Mucosa of descending colon (tissue), 3 donors: ENCODE measurements at regions of chr9 and their contacts with region 1.

Region 1: GRCh38 chr9:129656795-129657390 is 8.6 kb upstream of the PRRX2 start:
- DNase-seq: no peak
- ATAC-seq: peak; percentile 74
- H3K4me3 ChIP-seq: no peak overlapping the region
- H3K4me1 ChIP-seq: no peaks in the 10 kb centered on the region
- CTCF ChIP-seq: no peak

Region 2: GRCh38 chr9:129796029-129796910 is 139.4 kb after region 1 on chr9:
- intact Hi-C with region 1: loop called in 1 of 2 experiments (anchors 10 kb)
- DNase-seq: no peak
- ATAC-seq: no peak
- H3K4me3 ChIP-seq: no peak overlapping the region
- H3K4me1 ChIP-seq: no peaks in the 10 kb centered on the region
- CTCF ChIP-seq: no peak